Caco-2 (cell line): ENCODE measurements at regions of chr6 and their contacts with region 1.

Region 1: DNA sequence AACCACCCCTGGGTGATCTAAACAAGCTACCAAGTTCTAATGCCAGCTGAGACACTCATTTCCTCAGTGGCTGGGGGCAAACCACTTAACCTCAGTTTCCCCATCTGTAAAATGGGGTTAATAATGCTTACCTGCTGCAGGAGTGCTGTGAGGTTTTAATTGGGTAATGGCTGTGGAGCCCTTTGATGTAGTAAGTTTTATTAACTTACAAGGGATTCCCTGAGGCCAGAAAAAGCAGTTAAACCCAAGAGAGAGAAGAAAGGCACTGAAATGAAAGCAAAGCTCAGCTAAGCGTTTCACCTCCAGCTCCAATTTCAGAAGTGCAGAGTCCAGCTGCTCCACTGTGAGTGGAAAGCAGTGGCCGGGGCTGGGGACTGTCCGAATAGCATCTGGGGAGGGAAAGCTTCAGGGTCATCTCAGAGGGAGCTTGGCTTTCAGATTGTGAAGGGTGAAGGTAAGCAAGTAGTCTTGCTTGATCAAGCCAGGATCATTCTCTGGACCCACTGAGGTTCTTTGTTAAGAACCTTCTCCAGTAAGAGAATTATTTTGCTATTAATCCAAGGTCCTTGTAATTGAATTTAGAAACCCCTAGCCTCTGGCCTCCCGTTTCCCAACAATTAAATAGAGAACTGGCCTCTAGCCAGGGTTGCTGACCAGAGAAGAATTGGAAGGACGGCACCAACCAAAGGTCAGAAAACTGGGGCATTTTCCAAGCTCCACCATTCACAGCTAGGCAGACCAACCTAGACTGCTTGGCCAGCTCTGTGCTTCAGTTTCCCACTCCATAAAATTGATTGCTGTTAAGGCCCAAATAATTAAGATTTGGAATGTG is 20.9 kb upstream of the TCP11 start:
- DNase-seq: no peak
- H3K4me3 ChIP-seq: no peak overlapping the region
- H3K4me3 Mint-ChIP-seq: no peak overlapping the region
- H3K27ac Mint-ChIP-seq: no peak overlapping the region
- H3K4me1 ChIP-seq: peaks cover 6% of the 10 kb centered on the region; the same call in 1 of the 2 replicates
- H3K4me1 Mint-ChIP-seq: peaks cover 13% of the 10 kb centered on the region
- H3K27me3 ChIP-seq: no peaks in the 10 kb centered on the region
- H3K27me3 Mint-ChIP-seq: no peaks in the 10 kb centered on the region
- CTCF ChIP-seq: no peak

Region 2: DNA sequence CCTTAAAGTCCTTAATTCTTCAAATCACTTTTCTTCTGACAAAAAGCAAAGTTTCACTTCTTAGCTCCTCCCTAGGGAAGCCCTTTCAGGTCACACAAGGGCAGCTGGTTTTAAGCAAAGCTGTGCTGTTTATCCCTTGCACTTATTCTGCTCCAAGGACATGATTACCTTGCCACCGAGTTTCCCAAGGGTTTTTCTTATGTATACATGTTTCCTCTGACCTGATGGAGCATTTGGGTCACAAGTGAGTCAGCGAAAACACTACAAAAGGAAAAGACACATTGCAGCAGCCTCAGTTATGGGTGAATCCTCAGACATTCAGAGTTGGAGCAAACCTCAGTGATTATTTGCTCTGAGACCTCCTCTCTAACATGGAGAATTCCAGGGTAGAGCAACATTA is 438.8 kb before region 1 on chr6:
- CTCF ChIA-PET with region 1: no interaction called
- POLR2A ChIA-PET with region 1: no interaction called
- intact Hi-C with region 1: no loop called
- DNase-seq: no peak
- H3K4me3 ChIP-seq: no peak overlapping the region
- H3K4me3 Mint-ChIP-seq: no peak overlapping the region
- H3K27ac Mint-ChIP-seq: peak overlapping the region; percentile 58
- H3K4me1 ChIP-seq: peaks cover 29% of the 10 kb centered on the region
- H3K4me1 Mint-ChIP-seq: peaks cover 17% of the 10 kb centered on the region
- H3K27me3 ChIP-seq: no peaks in the 10 kb centered on the region
- H3K27me3 Mint-ChIP-seq: no peaks in the 10 kb centered on the region
- CTCF ChIP-seq: no peak

Region 3: DNA sequence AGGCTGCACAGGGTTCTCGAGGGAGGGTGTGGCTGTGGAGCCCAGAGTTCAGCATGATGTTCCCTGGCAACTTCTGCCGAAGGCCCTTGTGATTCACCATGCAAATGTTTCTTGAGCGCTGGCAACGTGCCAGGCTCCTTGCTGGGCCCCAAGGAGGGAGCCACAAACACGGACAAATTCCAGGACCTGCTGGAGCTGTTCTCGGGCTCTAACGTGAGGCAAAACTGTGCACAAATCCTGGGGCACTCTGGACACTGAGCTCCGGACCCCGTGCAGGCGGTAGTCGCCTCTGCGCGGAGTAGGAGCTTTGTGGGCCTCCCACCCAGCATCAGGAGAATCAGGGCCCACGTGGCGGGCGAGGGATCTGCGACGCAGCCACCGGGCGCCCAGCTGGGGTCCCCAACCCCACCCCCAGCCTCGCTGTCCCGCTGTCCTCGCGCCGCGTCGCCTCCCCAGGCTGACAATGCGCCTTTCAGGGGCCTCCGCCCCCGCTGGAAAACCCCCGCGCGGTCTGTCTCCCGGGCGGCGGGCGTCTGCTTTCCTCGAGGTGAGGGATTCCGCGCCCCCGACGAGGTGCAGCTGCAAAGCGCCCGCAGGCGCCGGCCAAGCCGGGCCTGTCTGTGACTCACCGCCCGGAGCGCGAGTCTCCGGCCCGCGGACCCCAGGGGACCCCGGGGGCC is 20.1 kb after region 1 on chr6:
- CTCF ChIA-PET with region 1: no interaction called
- POLR2A ChIA-PET with region 1: no interaction called
- intact Hi-C with region 1: no loop called
- DNase-seq: no peak
- H3K4me3 ChIP-seq: no peak overlapping the region
- H3K4me3 Mint-ChIP-seq: no peak overlapping the region
- H3K27ac Mint-ChIP-seq: no peak overlapping the region
- H3K4me1 ChIP-seq: peaks cover 25% of the 10 kb centered on the region
- H3K4me1 Mint-ChIP-seq: peaks cover 15% of the 10 kb centered on the region
- H3K27me3 ChIP-seq: no peaks in the 10 kb centered on the region
- H3K27me3 Mint-ChIP-seq: no peaks in the 10 kb centered on the region
- CTCF ChIP-seq: no peak

Region 4: DNA sequence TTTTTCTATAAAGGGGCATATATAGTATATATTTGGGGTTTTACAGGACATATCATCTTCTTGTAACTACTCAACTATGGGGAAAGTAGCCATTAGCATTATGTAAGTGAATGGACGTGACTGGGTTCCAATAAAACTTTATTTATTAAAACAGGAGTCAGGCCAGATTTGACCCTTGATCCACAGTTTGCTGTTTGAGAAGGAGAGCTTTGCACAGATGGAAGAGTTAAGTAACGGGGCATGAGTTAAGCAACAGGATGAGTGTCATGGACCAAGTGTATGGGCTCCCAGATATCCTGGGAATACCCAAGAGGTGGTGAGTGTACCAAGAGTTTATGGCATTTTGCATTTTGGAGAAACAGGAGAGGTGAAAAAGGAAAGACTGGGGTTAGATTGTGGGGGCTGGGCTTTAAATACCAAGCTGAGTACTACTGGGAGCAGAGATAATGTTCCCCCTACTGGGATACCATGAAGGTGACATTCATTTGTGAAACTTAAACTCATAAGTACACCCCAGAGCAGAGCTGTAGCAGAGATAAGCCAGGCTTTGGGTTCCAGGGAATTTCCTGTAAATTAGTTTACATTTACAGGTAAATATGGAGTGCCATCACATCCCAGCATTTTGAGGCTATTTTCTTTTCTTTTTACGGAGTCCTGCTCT is 33.3 kb after region 1 on chr6:
- CTCF ChIA-PET with region 1: no interaction called
- POLR2A ChIA-PET with region 1: no interaction called
- intact Hi-C with region 1: loop called (anchors 5 kb)
- DNase-seq: no peak
- H3K4me3 ChIP-seq: no peak overlapping the region
- H3K4me3 Mint-ChIP-seq: no peak overlapping the region
- H3K27ac Mint-ChIP-seq: no peak overlapping the region
- H3K4me1 ChIP-seq: peaks cover 7% of the 10 kb centered on the region; the same call in 1 of the 2 replicates
- H3K4me1 Mint-ChIP-seq: peaks cover 15% of the 10 kb centered on the region
- H3K27me3 ChIP-seq: no peaks in the 10 kb centered on the region
- H3K27me3 Mint-ChIP-seq: no peaks in the 10 kb centered on the region
- CTCF ChIP-seq: no peak

Region 5: DNA sequence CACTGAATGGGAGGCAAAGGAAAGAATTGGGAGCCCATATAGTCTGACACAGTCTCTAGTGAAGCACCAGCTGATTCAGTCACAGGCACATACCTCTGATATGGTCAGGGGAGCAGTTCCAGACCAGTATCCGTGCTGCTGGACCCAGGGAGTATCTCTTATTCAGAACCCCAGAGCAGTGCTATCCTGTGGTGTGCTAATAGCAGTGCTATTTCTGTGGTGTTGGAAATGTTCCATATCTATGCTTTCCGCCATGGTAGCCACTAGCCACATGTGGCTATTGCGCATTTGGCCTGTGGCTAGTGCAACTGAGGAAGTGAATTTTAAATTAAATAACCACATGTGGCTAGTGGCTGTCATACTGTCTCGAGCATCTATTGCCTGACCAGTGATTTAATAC is 62.7 kb after region 1 on chr6:
- CTCF ChIA-PET with region 1: no interaction called
- POLR2A ChIA-PET with region 1: no interaction called
- intact Hi-C with region 1: no loop called
- DNase-seq: no peak
- H3K4me3 ChIP-seq: no peak overlapping the region
- H3K4me3 Mint-ChIP-seq: no peak overlapping the region
- H3K27ac Mint-ChIP-seq: no peak overlapping the region
- H3K4me1 ChIP-seq: no peaks in the 10 kb centered on the region
- H3K4me1 Mint-ChIP-seq: no peaks in the 10 kb centered on the region
- H3K27me3 ChIP-seq: no peaks in the 10 kb centered on the region
- H3K27me3 Mint-ChIP-seq: no peaks in the 10 kb centered on the region
- CTCF ChIP-seq: no peak

Region 6: DNA sequence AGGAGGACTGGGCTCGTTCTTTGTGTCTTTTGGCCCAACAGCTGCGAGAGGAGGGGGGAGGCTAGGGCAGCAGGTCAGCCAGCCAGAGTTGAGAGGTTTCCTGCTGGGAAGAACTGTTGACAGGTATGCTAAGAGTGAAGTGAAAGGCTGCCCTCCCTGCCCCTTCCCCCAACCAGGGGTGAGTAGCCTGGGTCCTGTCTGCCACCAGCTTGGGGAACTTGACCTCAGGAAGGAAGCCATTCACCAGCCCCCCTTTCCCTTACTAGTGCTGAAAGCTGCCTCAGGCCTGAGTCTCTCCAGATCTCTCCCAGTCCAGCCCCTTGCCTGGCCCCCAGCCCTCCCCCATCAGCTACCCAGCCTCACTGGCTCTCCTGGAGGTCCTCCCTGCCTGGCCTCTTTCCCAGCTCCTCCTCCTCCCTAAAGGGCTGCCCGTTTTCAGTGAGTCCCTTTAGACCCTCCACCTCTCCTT is 76.9 kb after region 1 on chr6:
- CTCF ChIA-PET with region 1: no interaction called
- POLR2A ChIA-PET with region 1: no interaction called
- intact Hi-C with region 1: no loop called
- DNase-seq: no peak
- H3K4me3 ChIP-seq: no peak overlapping the region
- H3K4me3 Mint-ChIP-seq: no peak overlapping the region
- H3K27ac Mint-ChIP-seq: no peak overlapping the region
- H3K4me1 ChIP-seq: no peaks in the 10 kb centered on the region
- H3K4me1 Mint-ChIP-seq: peaks cover 13% of the 10 kb centered on the region
- H3K27me3 ChIP-seq: no peaks in the 10 kb centered on the region
- H3K27me3 Mint-ChIP-seq: no peaks in the 10 kb centered on the region
- CTCF ChIP-seq: no peak